SK-N-SH (cell line): ENCODE measurements at regions of chr20 and their contacts with region 1.

Region 1: GRCh38 chr20:51595058-51595532 is 52.6 kb upstream of the NFATC2 start:
- DNase-seq: peak; percentile 83
- H3K4me3 ChIP-seq: no peak overlapping the region; a peak in 1 of 4 replicates
- H3K27ac ChIP-seq: peak overlapping the region in 1 of 2 experiments; percentile 50; a peak in 1 of 4 replicates
- H3K4me1 ChIP-seq: peaks cover 6 to 12% of the 10 kb centered on the region in 2 experiments; a peak in 2 of 4 replicates
- H3K27me3 ChIP-seq: no peaks in the 10 kb centered on the region
- CTCF ChIP-seq: peak; percentile 90
- EP300 ChIP-seq: no peak
- RAD21 ChIP-seq: peak; percentile 96

Region 2: GRCh38 chr20:50980851-50981713 is 614.0 kb before region 1 on chr20:
- CTCF ChIA-PET with region 1: interaction called, 28 read pairs
- POLR2A ChIA-PET with region 1: no interaction called
- DNase-seq: peak; percentile 83
- H3K4me3 ChIP-seq: no peak overlapping the region; a peak in 1 of 4 replicates
- H3K27ac ChIP-seq: peak overlapping the region in 1 of 2 experiments; percentile 91; a peak in 2 of 4 replicates
- H3K4me1 ChIP-seq: peaks cover 4 to 12% of the 10 kb centered on the region in 2 experiments; a peak in 1 of 4 replicates
- H3K27me3 ChIP-seq: no peaks in the 10 kb centered on the region
- CTCF ChIP-seq: peak; percentile 93
- EP300 ChIP-seq: no peak
- RAD21 ChIP-seq: peak; percentile 77

Region 3: GRCh38 chr20:51354769-51355319 is 240.3 kb before region 1 on chr20:
- CTCF ChIA-PET with region 1: interaction called, 12 read pairs
- POLR2A ChIA-PET with region 1: no interaction called
- DNase-seq: no peak
- H3K4me3 ChIP-seq: no peak overlapping the region
- H3K27ac ChIP-seq: peak overlapping the region in 1 of 2 experiments; percentile 87; a peak in 2 of 4 replicates
- H3K4me1 ChIP-seq: peaks cover 0 to 22% of the 10 kb centered on the region in 2 experiments; a peak in 2 of 4 replicates
- H3K27me3 ChIP-seq: no peaks in the 10 kb centered on the region
- CTCF ChIP-seq: no peak
- EP300 ChIP-seq: no peak
- RAD21 ChIP-seq: no peak

Region 4: GRCh38 chr20:51372176-51372803 is 222.8 kb before region 1 on chr20:
- CTCF ChIA-PET with region 1: interaction called, 95 read pairs
- POLR2A ChIA-PET with region 1: no interaction called
- DNase-seq: peak; percentile 86
- H3K4me3 ChIP-seq: no peak overlapping the region
- H3K27ac ChIP-seq: peak overlapping the region in 1 of 2 experiments; percentile 32; a peak in 1 of 4 replicates
- H3K4me1 ChIP-seq: peaks cover 6 to 24% of the 10 kb centered on the region in 2 experiments; a peak in 2 of 4 replicates
- H3K27me3 ChIP-seq: no peaks in the 10 kb centered on the region
- CTCF ChIP-seq: peak; percentile 77
- EP300 ChIP-seq: no peak
- RAD21 ChIP-seq: peak; percentile 93

Region 5: GRCh38 chr20:51385646-51386530 is 209.2 kb before region 1 on chr20:
- CTCF ChIA-PET with region 1: interaction called, 46 read pairs
- POLR2A ChIA-PET with region 1: no interaction called
- DNase-seq: peak; percentile 56
- H3K4me3 ChIP-seq: no peak overlapping the region
- H3K27ac ChIP-seq: no peak overlapping the region
- H3K4me1 ChIP-seq: peaks cover 0 to 10% of the 10 kb centered on the region in 2 experiments; a peak in 2 of 4 replicates
- H3K27me3 ChIP-seq: no peaks in the 10 kb centered on the region
- CTCF ChIP-seq: peak; percentile 64
- EP300 ChIP-seq: no peak
- RAD21 ChIP-seq: peak; percentile 76

Region 6: GRCh38 chr20:51573576-51574243 is 21.4 kb before region 1 on chr20:
- CTCF ChIA-PET with region 1: interaction called, 16 read pairs
- POLR2A ChIA-PET with region 1: no interaction called
- DNase-seq: no peak
- H3K4me3 ChIP-seq: no peak overlapping the region
- H3K27ac ChIP-seq: no peak overlapping the region
- H3K4me1 ChIP-seq: no peaks in the 10 kb centered on the region
- H3K27me3 ChIP-seq: no peaks in the 10 kb centered on the region
- CTCF ChIP-seq: no peak
- EP300 ChIP-seq: no peak
- RAD21 ChIP-seq: no peak